Common myeloid progenitor, CD34-positive (primary cell): ENCODE measurements at regions of chr4 and their contacts with region 1.

Region 1: DNA sequence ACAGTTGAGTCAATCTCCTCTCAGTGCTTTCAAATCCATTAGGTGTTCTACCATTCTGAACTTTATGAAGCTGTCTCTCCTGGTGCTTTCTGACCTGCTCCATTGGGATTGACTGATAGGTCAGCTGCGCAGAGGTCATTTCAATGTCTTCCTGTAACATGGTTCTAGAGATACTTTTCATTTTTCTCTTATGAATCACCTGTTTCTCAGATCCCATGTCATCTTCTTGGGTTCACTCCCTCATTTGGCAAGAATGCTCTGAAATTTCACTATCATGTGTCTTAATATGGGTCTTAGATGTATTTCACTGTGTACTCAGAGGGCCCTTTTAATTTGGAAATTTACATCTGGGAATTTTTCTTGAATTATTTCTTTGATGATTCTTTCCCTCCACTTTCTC is 13.8 kb upstream of the PGM2 start:
- DNase-seq: no peak
- H3K4me3 ChIP-seq: no peak overlapping the region
- H3K27ac ChIP-seq: no peak overlapping the region
- H3K4me1 ChIP-seq: peaks cover 2 to 19% (median 15%) of the 10 kb centered on the region in 4 experiments
- H3K27me3 ChIP-seq: no peaks in the 10 kb centered on the region

Region 2: DNA sequence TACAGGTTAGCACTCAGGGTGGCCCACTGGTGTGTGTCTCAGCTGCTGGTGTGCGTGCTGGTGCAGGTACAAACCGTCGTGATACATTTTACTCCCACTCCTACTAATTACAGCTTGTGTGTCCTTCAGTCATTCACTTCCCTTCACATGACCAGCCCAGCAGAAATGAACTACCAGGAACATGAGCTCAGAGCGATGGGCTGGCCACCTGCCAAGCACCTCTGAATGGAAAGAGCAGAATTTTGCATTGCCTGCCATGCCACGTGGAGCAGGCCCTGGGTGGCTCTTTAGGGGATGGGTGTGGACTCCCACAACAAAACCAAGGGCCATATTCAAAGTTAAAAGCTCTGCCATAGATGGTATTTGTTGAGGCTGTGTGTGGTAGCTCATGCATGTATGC is 45.2 kb before region 1 on chr4:
- CTCF ChIA-PET with region 1: no interaction called
- POLR2A ChIA-PET with region 1: no interaction called
- DNase-seq: peak in 2 of 3 donors; percentile 59 to 61
- H3K4me3 ChIP-seq: no peak overlapping the region
- H3K27ac ChIP-seq: no peak overlapping the region
- H3K4me1 ChIP-seq: peaks cover 5 to 20% (median 12%) of the 10 kb centered on the region in 4 experiments
- H3K27me3 ChIP-seq: no peaks in the 10 kb centered on the region

Region 3: GRCh38 chr4:37826295-37827029 is 13.8 kb after region 1 on chr4 and contains the start of gene PGM2:
- CTCF ChIA-PET with region 1: interaction called, 10 read pairs
- POLR2A ChIA-PET with region 1: interaction called, 4 read pairs
- DNase-seq: peak; percentile 90 to 98 (median 97)
- H3K4me3 ChIP-seq: peak within 1 kb of the TSS; percentile 87 to 98 (median 97)
- H3K27ac ChIP-seq: peak within 1 kb of the TSS; percentile 75 to 86
- H3K4me1 ChIP-seq: peaks cover 11 to 30% (median 20%) of the 10 kb centered on the region in 4 experiments
- H3K27me3 ChIP-seq: no peaks in the 10 kb centered on the region